H1 (cell line): ENCODE measurements at regions of chrX and their contacts with region 1.

Region 1: GRCh38 chrX:12974796-12975669 is at the start of gene TMSB4X:
- DNase-seq: peak; percentile 33 to 80
- H3K4me3 ChIP-seq: peak within 1 kb of the TSS; percentile 82 to 100 (median 88)
- H3K27ac ChIP-seq: peak within 1 kb of the TSS; percentile 91
- H3K4me1 ChIP-seq: peaks cover 0 to 10% (median 1%) of the 10 kb centered on the region in 4 experiments; a peak in 4 of 7 replicates
- H3K27me3 ChIP-seq: no peaks in the 10 kb centered on the region
- CTCF ChIP-seq: no peak
- EP300 ChIP-seq: no peak
- POLR2A ChIP-seq: peak; percentile 98 to 99
- RAD21 ChIP-seq: no peak
- total RNA-seq, gene TMSB4X: 2,063 and 2,127 TPM in 2 replicates

Region 2: GRCh38 chrX:12843668-12844279 is 131.3 kb before region 1 on chrX:
- CTCF ChIA-PET with region 1: no interaction called
- POLR2A ChIA-PET with region 1: no interaction called
- DNase-seq: no peak
- H3K4me3 ChIP-seq: no peak overlapping the region
- H3K27ac ChIP-seq: no peak overlapping the region
- H3K4me1 ChIP-seq: no peaks in the 10 kb centered on the region
- H3K27me3 ChIP-seq: no peaks in the 10 kb centered on the region
- CTCF ChIP-seq: no peak
- EP300 ChIP-seq: no peak
- POLR2A ChIP-seq: no peak
- RAD21 ChIP-seq: no peak

Region 3: GRCh38 chrX:12936947-12937346 is 38.1 kb before region 1 on chrX:
- CTCF ChIA-PET with region 1: no interaction called
- POLR2A ChIA-PET with region 1: no interaction called
- DNase-seq: no peak
- H3K4me3 ChIP-seq: no peak overlapping the region
- H3K27ac ChIP-seq: no peak overlapping the region
- H3K4me1 ChIP-seq: no peaks in the 10 kb centered on the region
- H3K27me3 ChIP-seq: no peaks in the 10 kb centered on the region
- CTCF ChIP-seq: no peak
- EP300 ChIP-seq: no peak
- POLR2A ChIP-seq: no peak
- RAD21 ChIP-seq: no peak

Region 4: GRCh38 chrX:12955882-12956703 is 18.9 kb before region 1 on chrX:
- CTCF ChIA-PET with region 1: interaction called, 6 read pairs
- POLR2A ChIA-PET with region 1: interaction called, 19 read pairs
- DNase-seq: no peak
- H3K4me3 ChIP-seq: no peak overlapping the region
- H3K27ac ChIP-seq: no peak overlapping the region
- H3K4me1 ChIP-seq: no peaks in the 10 kb centered on the region
- H3K27me3 ChIP-seq: no peaks in the 10 kb centered on the region
- CTCF ChIP-seq: no peak
- EP300 ChIP-seq: no peak
- POLR2A ChIP-seq: no peak
- RAD21 ChIP-seq: no peak

Region 5: DNA sequence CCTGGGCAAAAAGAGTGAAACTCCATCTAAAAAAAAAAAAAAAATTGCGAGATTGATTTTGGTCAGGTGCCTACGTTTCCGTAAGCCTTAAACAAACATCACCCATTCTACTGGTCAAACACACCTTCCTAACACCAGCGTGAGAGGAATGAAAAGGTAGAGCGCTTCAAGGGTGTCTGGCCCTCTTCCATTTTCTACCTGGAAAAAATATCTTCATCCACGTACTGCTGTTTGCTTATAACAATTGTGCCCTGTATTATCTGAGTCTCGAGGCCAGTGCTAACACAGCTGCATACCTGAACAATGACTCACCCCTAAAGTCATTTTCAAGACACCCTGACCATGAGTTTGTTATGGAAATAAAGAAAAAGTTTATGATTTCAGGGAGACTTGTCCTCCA is 13.8 kb after region 1 on chrX:
- CTCF ChIA-PET with region 1: interaction called, 4 read pairs
- POLR2A ChIA-PET with region 1: interaction called, 10 read pairs
- DNase-seq: no peak
- H3K4me3 ChIP-seq: no peak overlapping the region
- H3K27ac ChIP-seq: no peak overlapping the region
- H3K4me1 ChIP-seq: no peaks in the 10 kb centered on the region
- H3K27me3 ChIP-seq: no peaks in the 10 kb centered on the region
- CTCF ChIP-seq: no peak
- EP300 ChIP-seq: no peak
- POLR2A ChIP-seq: no peak
- RAD21 ChIP-seq: no peak

Region 6: GRCh38 chrX:13029341-13029740 is 54.3 kb after region 1 on chrX:
- CTCF ChIA-PET with region 1: no interaction called
- POLR2A ChIA-PET with region 1: interaction called, 12 read pairs
- DNase-seq: no peak
- H3K4me3 ChIP-seq: no peak overlapping the region
- H3K27ac ChIP-seq: peak overlapping the region; percentile 68
- H3K4me1 ChIP-seq: peaks cover 0 to 8% (median 4%) of the 10 kb centered on the region in 4 experiments; a peak in 4 of 7 replicates
- H3K27me3 ChIP-seq: no peaks in the 10 kb centered on the region
- CTCF ChIP-seq: no peak
- EP300 ChIP-seq: no peak
- POLR2A ChIP-seq: no peak
- RAD21 ChIP-seq: no peak